Spleen (tissue), 13 donors: ENCODE measurements at regions of chr16 and their contacts with region 1.

Region 1: GRCh38 chr16:75622761-75623605 is at the start of gene ADAT1:
- DNase-seq: peak; percentile 100
- H3K4me3 ChIP-seq: peak within 1 kb of the TSS; percentile 62 to 94 (median 78)
- H3K27ac ChIP-seq: peak within 1 kb of the TSS; percentile 89 to 97 (median 94)
- H3K4me1 ChIP-seq: peaks cover 14 to 62% (median 46%) of the 10 kb centered on the region in 6 donors
- H3K27me3 ChIP-seq: no peaks in the 10 kb centered on the region
- CTCF ChIP-seq: peak in 3 of 11 experiments; percentile 17 to 47 (median 38)
- POLR2A ChIP-seq: peak; percentile 58 to 80 (median 74)
- total RNA-seq, gene ADAT1: 42.5 to 120 (median 65.5) TPM

Region 2: GRCh38 chr16:75464130-75464918 is 158.7 kb before region 1 on chr16 and contains the start of gene TMEM170A:
- intact Hi-C with region 1: loop called (anchors 10 kb)
- DNase-seq: peak; percentile 100
- H3K4me3 ChIP-seq: peak within 1 kb of the TSS; percentile 83 to 97 (median 93)
- H3K27ac ChIP-seq: peak within 1 kb of the TSS; percentile 96 to 100 (median 98)
- H3K4me1 ChIP-seq: peaks cover 0 to 63% (median 38%) of the 10 kb centered on the region in 6 donors
- H3K27me3 ChIP-seq: no peaks in the 10 kb centered on the region
- CTCF ChIP-seq: peak; percentile 100
- POLR2A ChIP-seq: peak; percentile 72 to 88 (median 88)
- total RNA-seq, gene TMEM170A: 26.3 to 54.0 (median 34.2) TPM

Region 3: GRCh38 chr16:75566040-75566810 is 56.8 kb before region 1 on chr16 and contains the start of gene GABARAPL2:
- intact Hi-C with region 1: loop called (anchors 5 kb)
- DNase-seq: peak; percentile 97
- H3K4me3 ChIP-seq: peak within 1 kb of the TSS; percentile 70 to 98 (median 94)
- H3K27ac ChIP-seq: peak within 1 kb of the TSS; percentile 83 to 96 (median 88)
- H3K4me1 ChIP-seq: peaks cover 38 to 63% (median 55%) of the 10 kb centered on the region in 6 donors
- H3K27me3 ChIP-seq: no peaks in the 10 kb centered on the region
- CTCF ChIP-seq: peak in 1 of 11 experiments; percentile 36
- POLR2A ChIP-seq: peak; percentile 56 to 60 (median 60)
- total RNA-seq, gene GABARAPL2: 111 to 133 (median 119) TPM

Region 4: DNA sequence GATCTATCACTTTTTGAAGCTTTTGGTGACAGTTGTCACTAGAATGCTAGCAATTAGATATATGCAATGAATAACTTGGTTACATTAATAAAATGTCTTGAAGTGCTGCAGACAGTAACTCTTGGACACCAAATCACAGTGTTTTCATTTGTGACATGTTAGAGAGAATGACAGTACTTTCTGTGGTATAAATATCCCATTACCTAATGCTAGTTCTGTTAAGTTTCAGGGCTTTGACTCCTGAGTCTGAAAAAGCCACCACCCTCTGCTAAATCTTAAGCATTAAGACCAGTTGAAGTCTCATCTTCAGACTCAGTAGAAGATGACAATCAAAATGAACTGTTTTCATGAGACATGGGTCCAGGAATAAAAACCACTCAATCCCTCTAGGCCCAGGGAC is 64.4 kb after region 1 on chr16:
- intact Hi-C with region 1: no loop called
- DNase-seq: no peak
- H3K4me3 ChIP-seq: no peak overlapping the region
- H3K27ac ChIP-seq: no peak overlapping the region
- H3K4me1 ChIP-seq: no peaks in the 10 kb centered on the region
- H3K27me3 ChIP-seq: no peaks in the 10 kb centered on the region
- CTCF ChIP-seq: no peak
- POLR2A ChIP-seq: no peak